Heart left ventricle (tissue), 16 donors: ENCODE measurements at regions of chr3 and their contacts with region 1.

Region 1: DNA sequence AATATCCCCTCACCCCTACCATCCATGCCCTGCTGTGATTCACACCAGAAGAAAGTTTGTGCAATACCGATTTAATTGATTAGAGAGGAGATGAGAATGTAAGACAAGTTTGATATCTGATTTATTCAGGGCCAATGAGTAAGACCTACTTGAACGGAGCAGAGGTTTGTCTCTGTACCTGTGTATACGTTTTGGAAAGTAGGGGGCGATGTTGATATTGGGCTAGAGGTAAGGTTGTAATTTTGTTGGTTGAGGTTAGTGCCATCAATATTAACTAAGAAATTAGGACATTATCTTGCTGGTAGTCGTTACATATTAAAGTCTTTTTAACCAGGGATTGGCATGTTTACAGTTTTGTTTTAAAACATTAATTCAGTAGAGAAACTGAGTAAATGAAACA is 20.5 kb downstream of the EAF2 start:
- DNase-seq: no peak
- ATAC-seq: no peak
- H3K4me3 ChIP-seq: no peak overlapping the region
- H3K27ac ChIP-seq: no peak overlapping the region
- H3K4me1 ChIP-seq: no peaks in the 10 kb centered on the region
- H3K27me3 ChIP-seq: no peaks in the 10 kb centered on the region
- CTCF ChIP-seq: peak in 6 of 12 donors; percentile 6 to 34 (median 26)
- POLR2A ChIP-seq: no peak

Region 2: GRCh38 chr3:121995161-121996137 is 139.9 kb after region 1 on chr3:
- intact Hi-C with region 1: loop called in 1 of 10 experiments (anchors 10 kb)
- DNase-seq: peak; percentile 47 to 72 (median 52)
- ATAC-seq: peak; percentile 47 to 83 (median 77)
- H3K4me3 ChIP-seq: no peak overlapping the region
- H3K27ac ChIP-seq: peak overlapping the region in 4 of 12 donors; percentile 19 to 89 (median 38)
- H3K4me1 ChIP-seq: peaks cover 0 to 55% (median 0%) of the 10 kb centered on the region in 12 donors
- H3K27me3 ChIP-seq: no peaks in the 10 kb centered on the region
- CTCF ChIP-seq: peak; percentile 21 to 63 (median 43)
- POLR2A ChIP-seq: no peak

Region 3: GRCh38 chr3:122186372-122186771 is 330.8 kb after region 1 on chr3:
- intact Hi-C with region 1: no loop called
- DNase-seq: no peak
- ATAC-seq: no peak
- H3K4me3 ChIP-seq: no peak overlapping the region
- H3K27ac ChIP-seq: no peak overlapping the region
- H3K4me1 ChIP-seq: peaks cover 0 to 14% (median 0%) of the 10 kb centered on the region in 12 donors
- H3K27me3 ChIP-seq: peaks cover 13 to 66% (median 39%) of the 10 kb centered on the region in 9 donors
- CTCF ChIP-seq: no peak
- POLR2A ChIP-seq: no peak